Left ventricle myocardium inferior (tissue), 1 donor: ENCODE measurements at regions of chr4 and their contacts with region 1.

Region 1: DNA sequence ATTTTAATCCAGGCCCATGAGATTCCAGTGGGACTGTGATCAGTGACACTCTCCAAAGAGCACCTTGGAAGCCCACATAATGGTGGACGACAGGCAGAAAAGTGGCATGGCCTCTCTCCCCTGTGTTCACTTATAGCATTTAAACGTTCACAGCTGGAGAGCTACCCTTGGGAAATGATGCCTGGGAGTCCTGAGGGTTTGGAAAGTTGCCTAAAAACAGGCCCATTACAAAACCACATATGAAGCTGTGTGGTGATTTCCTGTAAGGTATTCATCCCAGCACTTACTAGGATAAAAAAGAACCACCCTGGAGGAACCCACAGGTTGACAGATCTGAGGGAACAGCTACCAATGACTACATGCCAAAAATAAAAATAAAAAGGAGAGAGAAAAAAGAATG is 193.2 kb downstream of the RASL11B start:
- DNase-seq: no peak
- H3K4me3 ChIP-seq: no peak overlapping the region
- H3K27ac ChIP-seq: no peak overlapping the region
- H3K4me1 ChIP-seq: peaks cover 11% of the 10 kb centered on the region
- H3K27me3 ChIP-seq: no peaks in the 10 kb centered on the region
- CTCF ChIP-seq: no peak

Region 2: DNA sequence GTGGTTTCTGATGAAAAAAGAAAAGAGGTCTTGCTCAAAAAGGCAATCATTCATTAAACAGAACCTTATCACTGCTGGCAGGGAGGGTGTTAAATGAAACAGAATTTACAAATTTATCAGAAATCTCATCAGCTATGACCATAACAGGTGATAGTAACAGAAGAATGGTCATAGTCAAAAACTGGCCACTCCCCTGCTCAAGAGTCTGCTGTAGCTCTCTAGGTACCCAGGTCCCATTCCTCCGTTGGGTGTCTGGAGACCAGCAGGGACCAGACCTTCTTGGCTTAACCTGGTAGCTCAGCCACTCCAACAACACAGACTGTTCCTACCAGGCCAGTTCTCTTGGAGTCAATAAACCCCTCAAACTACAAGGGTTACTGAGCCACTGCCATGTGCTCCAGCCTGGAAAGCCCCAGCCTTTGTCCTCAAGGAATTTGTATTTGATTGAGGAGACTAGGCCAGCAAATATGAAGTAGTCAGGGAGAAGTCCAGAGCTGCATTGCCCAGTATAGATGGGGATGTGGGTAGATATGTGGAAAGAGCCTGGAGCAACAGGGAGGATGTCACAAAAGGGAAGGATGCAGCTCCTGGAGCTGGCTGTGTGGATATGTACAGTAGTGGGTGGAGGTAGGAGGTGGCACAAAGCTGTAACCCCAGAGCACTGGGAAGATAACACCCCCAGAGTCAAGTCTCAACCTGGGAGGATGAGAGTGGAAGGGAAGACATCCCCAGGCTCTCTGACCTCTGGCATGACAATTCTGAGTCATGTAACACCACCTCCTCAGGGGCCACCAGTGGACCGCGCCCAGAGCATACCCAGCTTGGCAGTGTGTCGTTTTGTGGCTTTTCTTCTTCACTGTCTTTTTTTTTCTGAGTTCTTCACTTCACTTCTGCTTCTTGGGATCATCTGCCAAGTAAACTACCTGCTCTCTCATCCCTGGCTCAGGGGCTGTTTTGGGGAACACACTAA is 171.3 kb before region 1 on chr4:
- intact Hi-C with region 1: no loop called
- DNase-seq: no peak
- H3K4me3 ChIP-seq: no peak overlapping the region
- H3K27ac ChIP-seq: no peak overlapping the region
- H3K4me1 ChIP-seq: no peaks in the 10 kb centered on the region
- H3K27me3 ChIP-seq: no peaks in the 10 kb centered on the region
- CTCF ChIP-seq: no peak

Region 3: GRCh38 chr4:53169695-53170617 is 114.7 kb after region 1 on chr4:
- intact Hi-C with region 1: loop called (anchors 10 kb)
- DNase-seq: no peak
- H3K4me3 ChIP-seq: no peak overlapping the region
- H3K27ac ChIP-seq: no peak overlapping the region
- H3K4me1 ChIP-seq: no peaks in the 10 kb centered on the region
- H3K27me3 ChIP-seq: no peaks in the 10 kb centered on the region
- CTCF ChIP-seq: no peak

Region 4: GRCh38 chr4:53744446-53745160 is 689.3 kb after region 1 on chr4:
- intact Hi-C with region 1: no loop called
- DNase-seq: no peak
- H3K4me3 ChIP-seq: no peak overlapping the region
- H3K27ac ChIP-seq: no peak overlapping the region
- H3K4me1 ChIP-seq: no peaks in the 10 kb centered on the region
- H3K27me3 ChIP-seq: peaks cover 32% of the 10 kb centered on the region
- CTCF ChIP-seq: no peak